ENCODE measurements at regions of chr6 and their contacts with region 1.

Region 1: DNA sequence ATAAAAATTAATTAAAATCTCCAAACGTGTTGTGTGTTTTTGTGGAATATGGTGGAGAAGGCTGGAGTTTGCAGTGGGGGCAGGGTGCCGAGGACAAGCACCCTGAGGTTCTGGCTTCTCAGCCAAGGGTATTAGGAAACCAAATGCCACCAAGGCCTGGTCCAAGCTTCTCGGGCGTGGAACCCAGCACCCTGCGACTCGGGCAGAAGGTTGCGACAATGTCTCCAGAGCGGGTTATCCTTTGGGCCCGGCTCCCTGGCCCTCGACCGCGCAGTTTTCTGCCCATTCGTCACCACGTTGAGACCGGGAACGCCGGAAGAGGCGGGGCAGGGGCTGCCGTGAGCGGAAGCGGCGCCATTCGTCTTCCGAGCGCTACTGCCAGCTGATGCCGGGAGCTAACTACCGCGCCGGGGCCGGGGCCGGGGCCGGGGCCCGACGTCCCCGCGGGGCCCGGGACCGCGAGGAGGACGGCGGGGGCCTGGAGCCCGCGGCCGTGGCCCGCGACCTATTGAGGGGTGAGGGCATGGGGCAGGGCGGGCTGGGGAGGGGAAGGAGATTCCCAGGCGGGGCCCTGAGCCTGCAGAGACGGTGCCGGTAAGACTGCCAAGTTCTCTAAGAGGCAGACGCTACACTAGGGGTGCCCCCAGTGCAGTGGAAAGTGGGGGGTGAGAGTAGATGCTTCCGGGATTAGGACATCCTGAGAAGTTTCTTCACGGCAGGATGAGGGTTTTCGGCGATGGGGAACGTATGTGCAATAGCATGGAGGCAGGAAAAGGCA is at the start of gene RRP36:
- DNase-seq: peak; percentile 67
- ATAC-seq: peak; percentile 89
- H3K4me3 Mint-ChIP-seq: peak within 1 kb of the TSS; percentile 97
- H3K27ac Mint-ChIP-seq: peak within 1 kb of the TSS; percentile 84
- H3K4me1 Mint-ChIP-seq: peaks cover 20% of the 10 kb centered on the region
- H3K27me3 Mint-ChIP-seq: no peaks in the 10 kb centered on the region
- CTCF ChIP-seq: no peak
- total RNA-seq, gene RRP36: 51.7 and 53.9 TPM in 2 replicates

Region 2: GRCh38 chr6:42952389-42952788 is 69.1 kb before region 1 on chr6:
- CTCF ChIA-PET with region 1: no interaction called
- POLR2A ChIA-PET with region 1: no interaction called
- intact Hi-C with region 1: no loop called
- DNase-seq: no peak
- ATAC-seq: no peak
- H3K4me3 Mint-ChIP-seq: no peak overlapping the region
- H3K27ac Mint-ChIP-seq: no peak overlapping the region
- H3K4me1 Mint-ChIP-seq: peaks cover 2% of the 10 kb centered on the region
- H3K27me3 Mint-ChIP-seq: no peaks in the 10 kb centered on the region
- CTCF ChIP-seq: no peak

Region 3: GRCh38 chr6:43053545-43054205 is 32.2 kb after region 1 on chr6 and contains the start of gene CUL7:
- CTCF ChIA-PET with region 1: no interaction called
- POLR2A ChIA-PET with region 1: interaction called, 37 read pairs
- intact Hi-C with region 1: loop called (anchors 1 kb)
- DNase-seq: peak; percentile 81
- ATAC-seq: peak; percentile 99
- H3K4me3 Mint-ChIP-seq: peak within 1 kb of the TSS; percentile 90
- H3K27ac Mint-ChIP-seq: peak within 1 kb of the TSS; percentile 90
- H3K4me1 Mint-ChIP-seq: peaks cover 37% of the 10 kb centered on the region
- H3K27me3 Mint-ChIP-seq: no peaks in the 10 kb centered on the region
- CTCF ChIP-seq: no peak
- total RNA-seq, gene CUL7: 15.9 and 19.1 TPM in 2 replicates